ENCODE measurements at regions of chr2 and their contacts with region 1.

Region 1: GRCh38 chr2:69717861-69718273 is 24.1 kb upstream of the ANXA4 start:
- DNase-seq: no peak
- ATAC-seq: no peak
- H3K4me3 ChIP-seq: no peak overlapping the region
- H3K4me3 Mint-ChIP-seq: no peak overlapping the region
- H3K27ac ChIP-seq: no peak overlapping the region
- H3K27ac Mint-ChIP-seq: peak overlapping the region in 1 of 9 donors; percentile 42
- H3K4me1 ChIP-seq: peaks cover 4 to 5% of the 10 kb centered on the region in 2 donors
- H3K4me1 Mint-ChIP-seq: peaks cover 6 to 24% (median 17%) of the 10 kb centered on the region in 7 donors
- H3K27me3 ChIP-seq: no peaks in the 10 kb centered on the region
- H3K27me3 Mint-ChIP-seq: peaks cover 0 to 3% (median 0%) of the 10 kb centered on the region in 5 donors

Region 2: DNA sequence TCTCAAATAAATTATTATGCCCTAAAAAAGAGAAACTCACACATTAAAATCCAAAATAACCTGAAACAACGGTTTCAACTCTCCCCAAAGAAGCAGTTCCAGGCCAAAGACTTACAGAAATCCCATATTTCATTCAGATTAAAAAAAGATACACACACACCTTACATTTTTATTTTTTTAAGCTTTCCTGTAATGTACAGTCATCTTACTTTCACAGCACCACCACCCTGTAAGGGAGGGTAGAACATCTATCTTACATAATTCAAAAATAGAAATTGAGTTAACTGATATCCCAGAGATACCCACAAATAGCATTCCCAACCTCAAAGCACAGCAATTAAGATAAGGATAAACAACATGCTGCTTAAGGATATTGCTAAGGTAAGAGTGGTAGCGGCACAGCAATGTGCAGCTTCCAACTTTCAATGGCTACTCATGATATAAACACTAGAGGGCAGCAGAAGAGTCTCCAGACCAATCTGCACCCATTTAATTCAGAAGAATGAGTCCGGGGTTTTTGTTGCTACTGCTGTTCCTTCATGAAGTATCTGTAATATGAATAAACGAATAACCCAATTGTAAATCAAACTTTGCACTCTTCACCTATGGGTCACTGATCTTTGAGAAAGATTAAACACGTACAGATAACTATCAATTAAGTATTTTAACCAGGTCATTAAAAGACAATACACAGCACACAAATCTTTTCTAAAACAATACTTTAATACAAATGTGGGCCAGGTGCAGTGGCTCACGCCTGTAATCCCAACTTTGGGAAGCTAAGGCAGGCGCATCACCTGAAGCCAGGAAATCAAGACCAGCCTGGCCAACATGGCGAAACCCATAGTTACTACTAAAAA is 342.1 kb before region 1 on chr2:
- CTCF ChIA-PET with region 1: no interaction called
- POLR2A ChIA-PET with region 1: no interaction called
- intact Hi-C with region 1: loop called in 1 of 2 experiments (anchors 1 kb)
- DNase-seq: peak in 5 of 9 donors; percentile 12 to 41 (median 19)
- ATAC-seq: peak; percentile 79
- H3K4me3 ChIP-seq: no peak overlapping the region
- H3K4me3 Mint-ChIP-seq: no peak overlapping the region
- H3K27ac ChIP-seq: no peak overlapping the region
- H3K27ac Mint-ChIP-seq: no peak overlapping the region
- H3K4me1 ChIP-seq: no peaks in the 10 kb centered on the region
- H3K4me1 Mint-ChIP-seq: peaks cover 14 to 31% (median 23%) of the 10 kb centered on the region in 7 donors
- H3K27me3 ChIP-seq: no peaks in the 10 kb centered on the region
- H3K27me3 Mint-ChIP-seq: no peaks in the 10 kb centered on the region

Region 3: DNA sequence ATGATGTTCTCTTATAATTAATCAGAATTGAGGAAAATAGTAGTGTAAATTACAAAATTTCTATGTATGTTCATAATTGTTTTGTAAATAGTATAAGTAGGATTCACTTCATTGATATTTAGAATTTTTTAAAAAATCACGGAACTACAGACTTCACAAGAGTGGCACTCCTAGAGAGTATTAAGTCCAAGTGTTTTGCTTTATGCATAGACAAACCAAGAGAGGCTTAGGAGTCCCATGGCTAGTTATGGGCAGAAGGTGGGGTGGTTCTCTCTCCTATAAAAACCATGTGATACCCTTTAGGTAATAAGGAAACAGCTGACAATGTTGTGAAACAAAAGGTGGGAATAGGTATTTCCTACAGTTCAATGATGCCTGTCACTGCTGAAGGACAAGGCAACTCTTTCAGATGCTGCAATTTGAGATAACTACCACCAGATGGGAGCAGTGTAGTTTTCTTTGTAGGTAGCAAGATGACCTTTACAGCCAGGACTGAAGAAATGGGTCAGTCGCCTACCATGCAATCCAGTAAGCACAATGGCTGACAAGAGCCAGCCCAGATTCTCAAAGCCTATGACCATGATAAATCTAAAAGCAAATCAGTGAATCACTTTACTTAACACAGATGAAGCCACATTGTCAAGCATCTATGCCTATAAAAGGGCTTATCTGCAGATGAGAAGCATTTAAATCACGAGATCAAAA is 158.3 kb before region 1 on chr2:
- CTCF ChIA-PET with region 1: interaction called, 33 read pairs
- POLR2A ChIA-PET with region 1: interaction called, 7 read pairs
- intact Hi-C with region 1: loop called (anchors 1 kb)
- DNase-seq: peak in 3 of 9 donors; percentile 22 to 32 (median 28)
- ATAC-seq: peak; percentile 75
- H3K4me3 ChIP-seq: no peak overlapping the region
- H3K4me3 Mint-ChIP-seq: peak overlapping the region in 9 of 10 donors; percentile 16 to 78 (median 48)
- H3K27ac ChIP-seq: no peak overlapping the region
- H3K27ac Mint-ChIP-seq: peak overlapping the region in 8 of 9 donors; percentile 10 to 83 (median 57)
- H3K4me1 ChIP-seq: peaks cover 8 to 62% of the 10 kb centered on the region in 2 donors
- H3K4me1 Mint-ChIP-seq: peaks cover 57 to 97% (median 93%) of the 10 kb centered on the region in 7 donors
- H3K27me3 ChIP-seq: no peaks in the 10 kb centered on the region
- H3K27me3 Mint-ChIP-seq: no peaks in the 10 kb centered on the region

Measured in naive thymus-derived CD4-positive, alpha-beta T cell (primary cell).